Activated CD4-positive, alpha-beta memory T cell treated with anti-CD3 and anti-CD28 coated beads, Interleukin-2, amount 10 ng/mL, durations not matched to agents 7 days and 5 days (primary cell): ENCODE measurements at regions of chr3 and their contacts with region 1.

Region 1: GRCh38 chr3:46378426-46378942 is 7.7 kb downstream of the CCR5 start:
- DNase-seq: peak; percentile 74
- H3K4me3 Mint-ChIP-seq: no peak overlapping the region
- H3K27ac Mint-ChIP-seq: no peak overlapping the region
- H3K4me1 Mint-ChIP-seq: peaks cover 59% of the 10 kb centered on the region
- H3K27me3 Mint-ChIP-seq: peaks cover 6% of the 10 kb centered on the region

Region 2: DNA sequence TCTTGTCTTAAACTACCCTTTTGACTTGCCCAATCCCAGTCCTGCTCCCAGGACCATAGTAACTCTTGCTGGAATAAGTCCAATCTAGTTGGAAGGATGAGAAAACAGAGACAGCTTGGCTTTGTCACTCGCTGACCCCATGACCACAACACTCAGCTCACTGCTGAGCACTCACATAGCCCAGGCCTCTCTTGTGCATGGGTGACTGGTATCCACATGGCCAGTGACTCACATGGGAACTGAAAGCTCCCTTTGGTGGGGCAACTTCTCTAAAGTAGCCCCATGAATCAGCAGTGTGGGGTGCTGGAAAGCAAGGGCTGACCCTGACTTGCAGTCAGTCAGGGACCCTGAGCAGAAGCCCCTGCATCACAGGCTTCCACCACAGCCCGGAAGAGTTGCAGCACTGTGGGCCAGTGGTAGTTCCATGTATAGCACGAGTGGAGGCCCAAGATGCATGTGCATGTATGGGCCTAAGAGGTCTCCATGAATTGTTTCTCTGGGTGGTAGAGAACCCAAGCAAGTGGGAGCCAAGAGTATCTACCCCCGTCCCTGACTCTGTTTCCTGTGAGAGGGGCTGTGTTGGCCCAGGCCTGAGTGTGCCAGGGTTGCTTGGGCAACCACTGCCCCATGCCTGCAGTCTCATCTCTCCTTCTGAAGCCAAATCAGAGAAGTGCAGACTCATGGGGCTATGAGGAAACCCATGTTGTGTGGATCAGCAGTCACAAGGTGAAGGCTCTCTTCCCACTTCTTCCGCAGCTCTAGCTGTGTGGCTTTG is 289.1 kb before region 1 on chr3:
- CTCF ChIA-PET with region 1: interaction called, 19 read pairs
- POLR2A ChIA-PET with region 1: no interaction called
- DNase-seq: peak; percentile 29
- H3K4me3 Mint-ChIP-seq: no peak overlapping the region
- H3K27ac Mint-ChIP-seq: no peak overlapping the region
- H3K4me1 Mint-ChIP-seq: peaks cover 59% of the 10 kb centered on the region
- H3K27me3 Mint-ChIP-seq: peaks cover 27% of the 10 kb centered on the region

Region 3: GRCh38 chr3:46208167-46208704 is 170.2 kb before region 1 on chr3 and contains the start of gene CCR1:
- CTCF ChIA-PET with region 1: interaction called, 135 read pairs
- POLR2A ChIA-PET with region 1: interaction called, 92 read pairs
- DNase-seq: peak; percentile 78
- H3K4me3 Mint-ChIP-seq: peak within 1 kb of the TSS; percentile 71
- H3K27ac Mint-ChIP-seq: peak within 1 kb of the TSS; percentile 75
- H3K4me1 Mint-ChIP-seq: peaks cover 54% of the 10 kb centered on the region
- H3K27me3 Mint-ChIP-seq: no peaks in the 10 kb centered on the region
- total RNA-seq, gene CCR1: 20.0 to 20.7 TPM

Region 4: DNA sequence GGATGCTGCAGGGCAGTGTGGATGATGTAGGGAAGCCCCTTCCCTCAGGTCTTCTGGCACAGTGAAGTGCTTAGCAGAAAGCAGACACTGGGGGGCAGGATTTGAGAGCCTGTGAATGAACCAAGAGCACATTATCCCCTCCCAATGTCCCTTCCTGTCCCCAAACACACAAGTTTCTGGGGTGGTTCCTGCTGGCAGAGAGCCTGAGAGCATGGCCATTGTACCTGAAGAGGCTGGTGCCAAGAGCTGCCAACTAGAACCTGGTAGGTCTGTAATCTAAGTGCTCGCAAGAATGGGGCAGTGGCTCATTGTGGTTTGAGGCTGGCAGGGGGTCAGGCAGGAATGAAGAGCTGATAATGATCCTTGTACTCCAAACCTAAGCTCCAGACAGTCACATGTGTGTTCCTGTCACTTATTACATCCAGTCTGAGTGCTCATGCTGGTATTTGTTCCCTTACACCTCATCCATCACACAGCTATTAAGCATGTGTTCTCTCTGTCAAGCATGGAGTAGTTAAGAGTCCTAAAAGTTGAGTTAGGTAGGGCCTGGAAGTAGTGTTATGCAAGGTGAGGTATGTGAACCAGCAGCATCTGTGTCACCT is 163.6 kb before region 1 on chr3:
- CTCF ChIA-PET with region 1: interaction called, 135 read pairs
- POLR2A ChIA-PET with region 1: interaction called, 92 read pairs
- DNase-seq: peak; percentile 43
- H3K4me3 Mint-ChIP-seq: no peak overlapping the region
- H3K27ac Mint-ChIP-seq: no peak overlapping the region
- H3K4me1 Mint-ChIP-seq: peaks cover 18% of the 10 kb centered on the region
- H3K27me3 Mint-ChIP-seq: peaks cover 20% of the 10 kb centered on the region

Region 5: DNA sequence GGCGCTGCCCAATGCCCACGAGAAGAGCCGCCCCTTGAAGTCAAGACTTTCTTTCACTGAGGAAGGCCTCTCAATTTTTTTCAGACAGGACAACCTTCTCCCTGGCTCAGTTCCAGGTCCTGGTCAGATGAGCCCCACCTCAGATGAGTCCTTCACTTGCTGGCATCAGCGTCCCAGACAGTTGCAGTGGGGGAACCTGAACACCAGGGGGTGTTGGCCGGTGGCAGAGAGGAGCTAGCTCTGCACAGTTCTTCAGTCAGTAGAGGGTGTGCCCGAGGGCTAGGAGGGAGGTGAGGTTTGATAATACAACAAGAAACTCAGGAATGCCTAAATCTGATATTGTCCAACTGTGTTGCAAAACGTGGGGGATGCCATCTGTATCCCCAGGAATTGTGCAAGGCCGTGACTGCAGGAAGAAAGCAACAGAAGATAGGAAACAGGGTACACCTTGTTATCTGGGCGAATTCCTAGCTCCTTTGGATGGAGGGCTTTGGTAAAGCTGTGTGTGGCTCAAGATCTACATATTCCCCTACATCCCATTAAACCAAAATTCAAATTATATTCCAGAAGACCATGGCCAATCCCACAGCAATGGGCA is 101.9 kb before region 1 on chr3:
- CTCF ChIA-PET with region 1: interaction called, 184 read pairs
- POLR2A ChIA-PET with region 1: interaction called, 3 read pairs
- DNase-seq: peak; percentile 85
- H3K4me3 Mint-ChIP-seq: no peak overlapping the region
- H3K27ac Mint-ChIP-seq: peak overlapping the region; percentile 41
- H3K4me1 Mint-ChIP-seq: peaks cover 57% of the 10 kb centered on the region
- H3K27me3 Mint-ChIP-seq: peaks cover 36% of the 10 kb centered on the region

Region 6: DNA sequence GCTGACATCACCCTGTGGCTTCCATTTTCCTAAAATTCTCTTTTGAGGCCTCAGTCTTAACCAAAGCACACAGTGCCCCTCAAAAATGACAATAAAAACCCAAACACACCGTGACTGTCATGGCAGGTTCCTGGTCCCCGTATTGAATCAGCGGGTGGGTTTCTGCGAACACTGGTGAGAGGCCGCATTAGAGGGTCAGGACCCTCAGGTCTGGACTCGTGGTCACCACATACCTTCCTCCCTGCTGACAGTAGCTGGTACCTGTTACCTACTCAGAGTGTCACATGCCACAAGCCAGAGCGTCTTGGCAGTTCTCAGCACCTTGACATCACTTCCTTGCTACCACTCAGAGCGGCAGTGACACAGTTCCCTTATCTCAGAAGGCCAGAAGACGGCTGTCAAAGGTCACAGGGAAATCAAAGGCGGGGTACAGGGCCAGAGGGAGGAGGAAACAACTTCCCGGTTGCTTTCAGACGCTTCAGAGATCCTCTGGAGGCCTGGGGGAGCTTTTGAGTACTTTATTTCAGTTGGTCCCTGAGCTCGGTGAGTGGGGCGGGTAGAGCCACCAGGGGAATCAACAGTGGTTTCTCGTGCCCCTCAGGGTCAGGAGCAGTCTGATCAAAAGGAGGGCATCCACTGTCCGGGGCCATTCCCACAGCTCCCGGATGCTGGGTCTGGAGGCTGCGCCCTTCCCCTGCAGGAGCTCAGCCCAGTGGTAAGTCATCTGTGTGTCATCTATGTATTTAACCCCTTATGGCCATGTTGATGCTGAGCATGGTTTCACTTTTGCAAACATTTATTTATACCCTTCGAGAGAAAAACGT is 28.5 kb after region 1 on chr3 and contains the starts of genes CCR5AS and CCRL2:
- CTCF ChIA-PET with region 1: interaction called, 11 read pairs
- POLR2A ChIA-PET with region 1: interaction called, 3 read pairs
- DNase-seq: peak; percentile 60
- H3K4me3 Mint-ChIP-seq: peak within 1 kb of the TSS; percentile 78
- H3K27ac Mint-ChIP-seq: peak within 1 kb of the TSS; percentile 83
- H3K4me1 Mint-ChIP-seq: peaks cover 33% of the 10 kb centered on the region
- H3K27me3 Mint-ChIP-seq: peaks cover 19% of the 10 kb centered on the region
- total RNA-seq, gene CCRL2: 5.4 to 6.2 TPM